T-cell (primary cell): ENCODE measurements at regions of chr16 and their contacts with region 1.

Region 1: GRCh38 chr16:53465606-53466280 is 31.5 kb downstream of the RBL2 start:
- DNase-seq: no peak
- ATAC-seq: peak in 1 of 4 experiments; percentile 36
- H3K4me3 ChIP-seq: no peak overlapping the region
- H3K4me3 Mint-ChIP-seq: peak overlapping the region in 1 of 3 donors; percentile 44
- H3K27ac ChIP-seq: no peak overlapping the region
- H3K27ac Mint-ChIP-seq: peak overlapping the region; percentile 86 to 87
- H3K4me1 ChIP-seq: peaks cover 17 to 39% of the 10 kb centered on the region in 2 experiments
- H3K4me1 Mint-ChIP-seq: peaks cover 56 to 58% (median 57%) of the 10 kb centered on the region in 3 donors
- H3K27me3 ChIP-seq: no peaks in the 10 kb centered on the region
- H3K27me3 Mint-ChIP-seq: no peaks in the 10 kb centered on the region

Region 2: GRCh38 chr16:53476867-53477266 is 11.1 kb after region 1 on chr16:
- CTCF ChIA-PET with region 1: no interaction called
- POLR2A ChIA-PET with region 1: interaction called in 1 of 2 experiments, 16 read pairs
- DNase-seq: no peak
- ATAC-seq: no peak
- H3K4me3 ChIP-seq: no peak overlapping the region
- H3K4me3 Mint-ChIP-seq: peak overlapping the region in 2 of 3 donors; percentile 7 to 17
- H3K27ac ChIP-seq: no peak overlapping the region
- H3K27ac Mint-ChIP-seq: peak overlapping the region; percentile 64 to 79
- H3K4me1 ChIP-seq: peaks cover 5 to 17% of the 10 kb centered on the region in 2 experiments
- H3K4me1 Mint-ChIP-seq: peaks cover 64 to 78% (median 68%) of the 10 kb centered on the region in 3 donors
- H3K27me3 ChIP-seq: no peaks in the 10 kb centered on the region
- H3K27me3 Mint-ChIP-seq: no peaks in the 10 kb centered on the region

Region 3: DNA sequence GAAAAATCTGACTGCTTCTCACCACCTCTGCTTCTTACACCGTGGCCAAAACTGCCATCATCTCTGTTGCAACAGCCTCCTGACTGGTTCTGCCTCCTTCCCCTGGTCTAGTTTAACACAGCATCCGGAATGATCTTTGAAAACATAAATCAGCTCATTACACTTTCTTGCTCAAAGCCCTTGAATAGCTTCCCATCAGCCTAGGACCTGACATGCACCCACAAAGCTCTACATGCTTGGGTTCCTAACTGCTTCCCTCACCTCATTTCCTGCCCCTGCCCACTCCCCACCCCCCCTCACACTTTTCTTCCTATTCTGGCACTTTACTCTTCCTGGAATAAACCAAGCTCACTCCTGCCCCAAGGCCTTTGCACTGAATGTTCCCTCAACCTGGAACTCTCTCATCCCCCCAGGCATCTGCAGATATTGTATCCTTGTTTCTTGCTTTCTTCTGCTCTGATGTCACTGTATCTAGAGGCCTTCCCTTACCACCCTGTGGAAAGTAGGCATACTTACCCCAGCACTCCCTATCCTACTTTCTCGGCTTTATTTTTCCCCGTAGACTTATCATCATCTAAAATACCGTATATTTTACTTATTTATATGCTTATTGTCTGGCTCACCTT is 350.6 kb after region 1 on chr16:
- CTCF ChIA-PET with region 1: no interaction called
- POLR2A ChIA-PET with region 1: interaction called in 1 of 2 experiments, 13 read pairs
- DNase-seq: no peak
- ATAC-seq: no peak
- H3K4me3 ChIP-seq: no peak overlapping the region
- H3K4me3 Mint-ChIP-seq: no peak overlapping the region
- H3K27ac ChIP-seq: no peak overlapping the region
- H3K27ac Mint-ChIP-seq: no peak overlapping the region
- H3K4me1 ChIP-seq: peaks cover 0 to 6% of the 10 kb centered on the region in 2 experiments
- H3K4me1 Mint-ChIP-seq: peaks cover 22 to 38% (median 29%) of the 10 kb centered on the region in 3 donors
- H3K27me3 ChIP-seq: no peaks in the 10 kb centered on the region
- H3K27me3 Mint-ChIP-seq: no peaks in the 10 kb centered on the region